Heart left ventricle (tissue), 16 donors: ENCODE measurements at regions of chrX and their contacts with region 1.

Region 1: GRCh38 chrX:70030301-70030767 is 19.4 kb downstream of the AWAT2 start:
- DNase-seq: peak in 4 of 5 donors; percentile 35 to 45 (median 40)
- ATAC-seq: peak in 3 of 4 donors; percentile 63 to 74 (median 67)
- H3K4me3 ChIP-seq: no peak overlapping the region
- H3K27ac ChIP-seq: no peak overlapping the region
- H3K4me1 ChIP-seq: peaks cover 0 to 22% (median 1%) of the 10 kb centered on the region in 12 donors
- H3K27me3 ChIP-seq: peaks cover 0 to 26% (median 0%) of the 10 kb centered on the region in 9 donors
- CTCF ChIP-seq: peak; percentile 59 to 76 (median 65)
- POLR2A ChIP-seq: no peak

Region 2: GRCh38 chrX:69424161-69424560 is 606.2 kb before region 1 on chrX:
- intact Hi-C with region 1: loop called in 1 of 10 experiments (anchors 10 kb)
- DNase-seq: no peak
- ATAC-seq: no peak
- H3K4me3 ChIP-seq: no peak overlapping the region
- H3K27ac ChIP-seq: no peak overlapping the region
- H3K4me1 ChIP-seq: no peaks in the 10 kb centered on the region
- H3K27me3 ChIP-seq: peaks cover 0 to 15% (median 0%) of the 10 kb centered on the region in 9 donors
- CTCF ChIP-seq: peak in 9 of 12 donors; percentile 21 to 49 (median 30)
- POLR2A ChIP-seq: no peak

Region 3: GRCh38 chrX:69493193-69493592 is 537.1 kb before region 1 on chrX:
- intact Hi-C with region 1: loop called in 6 of 10 experiments (anchors 1 to 10 kb)
- DNase-seq: peak in 1 of 5 donors; percentile 26
- ATAC-seq: peak in 3 of 4 donors; percentile 39 to 64 (median 42)
- H3K4me3 ChIP-seq: no peak overlapping the region
- H3K27ac ChIP-seq: no peak overlapping the region
- H3K4me1 ChIP-seq: no peaks in the 10 kb centered on the region
- H3K27me3 ChIP-seq: peaks cover 0 to 34% (median 0%) of the 10 kb centered on the region in 9 donors
- CTCF ChIP-seq: peak in 11 of 12 donors; percentile 11 to 50 (median 46)
- POLR2A ChIP-seq: no peak

Region 4: GRCh38 chrX:69538321-69538876 is 491.9 kb before region 1 on chrX:
- intact Hi-C with region 1: loop called (anchors 1 to 5 kb)
- DNase-seq: peak; percentile 66 to 84 (median 75)
- ATAC-seq: peak; percentile 87 to 98 (median 95)
- H3K4me3 ChIP-seq: peak overlapping the region in 11 of 12 donors; percentile 17 to 61 (median 51)
- H3K27ac ChIP-seq: peak overlapping the region in 2 of 12 donors; percentile 38 to 70
- H3K4me1 ChIP-seq: peaks cover 0 to 9% (median 0%) of the 10 kb centered on the region in 12 donors
- H3K27me3 ChIP-seq: peaks cover 0 to 21% (median 0%) of the 10 kb centered on the region in 9 donors
- CTCF ChIP-seq: peak; percentile 64 to 80 (median 73)
- POLR2A ChIP-seq: no peak